ENCODE measurements at regions of chr16 and their contacts with region 1.

Region 1: DNA sequence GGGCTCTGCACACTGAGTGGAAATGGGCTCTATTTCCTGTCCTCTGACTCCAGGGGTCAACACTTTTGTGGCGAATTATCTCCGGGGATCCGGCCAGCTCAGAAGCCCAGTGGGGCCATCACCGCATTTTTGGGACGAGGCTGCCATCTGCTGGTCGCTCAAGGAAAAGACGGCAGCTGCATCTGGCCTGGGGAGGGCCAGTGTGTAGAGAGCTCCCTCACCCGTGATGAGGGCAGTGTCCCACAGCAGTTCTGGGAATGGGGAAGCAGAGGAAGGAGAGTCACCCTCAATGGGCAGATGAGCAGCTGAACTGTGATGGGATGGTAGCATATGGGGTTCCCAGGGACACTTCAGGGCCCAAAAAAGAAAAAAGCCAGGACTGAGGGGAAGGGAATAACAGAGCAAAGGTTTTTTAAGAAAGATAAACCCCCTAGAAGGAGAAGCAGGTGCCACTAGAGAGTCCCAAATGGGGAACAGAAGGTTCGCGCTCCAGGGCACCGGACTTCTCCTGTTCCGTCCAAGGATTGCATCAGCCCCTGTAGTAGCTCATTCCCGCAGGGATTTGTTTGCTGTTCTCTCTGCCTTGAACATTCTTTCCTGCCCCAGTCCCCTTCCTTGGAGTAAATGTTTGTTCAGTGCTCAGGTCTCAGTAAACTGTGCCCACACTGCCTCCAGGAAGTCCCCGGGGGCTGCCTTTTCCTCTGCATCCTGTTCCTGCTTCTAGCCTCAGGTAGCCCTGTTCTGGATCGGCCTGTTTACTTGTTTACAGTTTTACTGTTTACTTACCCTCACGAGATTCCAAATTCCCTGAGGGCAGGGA is 9.3 kb upstream of the ABCC12 start:
- DNase-seq: no peak
- H3K4me3 ChIP-seq: no peak overlapping the region
- H3K27me3 ChIP-seq: no peaks in the 10 kb centered on the region; the same call in 1 of the 2 replicates
- CTCF ChIP-seq: peak; percentile 87

Region 2: GRCh38 chr16:46830902-46831647 is 1334.0 kb before region 1 on chr16 and contains the start of gene C16orf87:
- CTCF ChIA-PET with region 1: no interaction called
- POLR2A ChIA-PET with region 1: no interaction called
- DNase-seq: peak; percentile 54
- H3K4me3 ChIP-seq: peak within 1 kb of the TSS; percentile 77
- H3K27me3 ChIP-seq: no peaks in the 10 kb centered on the region; the same call in 1 of the 2 replicates
- CTCF ChIP-seq: no peak
- polyA plus RNA-seq, gene C16orf87: 2.1 and 5.8 TPM in 2 replicates

Region 3: DNA sequence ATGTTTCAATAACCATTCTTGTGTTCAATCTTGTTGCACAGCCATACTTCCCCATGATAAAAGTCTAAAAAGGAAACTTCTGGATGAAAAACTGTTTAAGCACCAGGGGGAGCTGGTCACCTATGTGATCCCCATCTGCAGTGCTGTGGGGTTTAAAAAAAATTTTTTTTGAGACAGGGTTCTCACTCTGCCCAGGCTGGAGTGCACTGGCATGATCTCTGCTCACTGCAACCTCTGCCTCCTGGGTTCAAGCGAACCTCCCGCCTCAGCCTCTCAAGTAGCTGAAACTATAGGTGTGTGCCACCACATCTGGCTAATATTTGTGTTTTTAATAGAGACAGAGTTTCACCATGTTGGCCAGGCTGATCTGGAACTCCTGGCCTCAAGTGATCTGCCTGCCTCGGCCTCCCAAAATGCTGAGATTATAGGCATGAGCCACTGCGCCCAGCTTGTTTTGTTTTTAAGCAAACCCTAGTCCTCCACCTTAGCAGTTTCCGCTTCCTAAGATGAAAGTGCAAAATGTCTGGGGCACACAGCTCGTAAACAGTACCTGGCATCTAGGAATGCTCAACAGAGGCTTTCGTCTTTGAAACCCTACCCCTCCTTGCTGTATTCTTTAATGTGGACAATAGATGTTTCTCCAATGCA is 1217.1 kb before region 1 on chr16:
- CTCF ChIA-PET with region 1: interaction called, 14 read pairs
- POLR2A ChIA-PET with region 1: no interaction called
- DNase-seq: no peak
- H3K4me3 ChIP-seq: no peak overlapping the region
- H3K27me3 ChIP-seq: no peaks in the 10 kb centered on the region
- CTCF ChIP-seq: peak; percentile 60

Region 4: DNA sequence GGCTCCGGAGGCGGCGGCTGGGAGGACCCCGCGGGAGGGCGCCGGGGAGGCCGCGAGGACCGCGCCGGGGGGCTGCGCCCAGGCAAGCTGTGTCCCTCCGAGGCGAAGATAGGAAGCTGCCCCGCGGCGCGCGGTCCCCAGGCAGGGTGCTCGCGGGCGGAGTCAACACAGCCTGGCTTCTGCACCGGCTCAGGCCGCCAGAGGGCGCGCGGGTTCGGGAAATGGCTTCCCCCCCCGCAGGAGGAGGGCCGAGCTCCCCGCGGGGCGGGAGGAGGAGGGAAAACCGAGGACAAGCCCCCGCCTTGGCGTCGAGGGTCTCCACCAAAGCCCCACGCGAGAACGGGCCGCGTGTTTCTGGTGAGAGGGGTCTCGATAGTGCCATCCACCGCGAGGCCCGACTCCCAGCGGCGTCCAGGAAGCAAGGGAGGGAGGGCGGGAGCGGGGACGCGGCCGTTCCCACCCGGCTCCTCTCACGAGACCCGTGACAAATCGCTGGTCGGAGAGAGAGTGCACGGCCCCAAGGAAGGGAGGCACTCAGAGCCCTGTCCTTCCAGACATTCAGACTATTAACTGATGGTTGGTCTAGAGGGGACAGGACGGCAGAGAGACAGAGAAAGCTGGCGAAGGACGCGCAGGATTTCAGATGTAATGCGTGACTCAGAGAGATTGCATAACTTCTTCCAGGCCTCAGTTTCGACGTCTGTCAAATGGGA is 1127.2 kb before region 1 on chr16:
- CTCF ChIA-PET with region 1: interaction called, 44 read pairs
- POLR2A ChIA-PET with region 1: no interaction called
- DNase-seq: peak; percentile 10
- H3K4me3 ChIP-seq: peak overlapping the region; percentile 57
- H3K27me3 ChIP-seq: no peaks in the 10 kb centered on the region
- CTCF ChIP-seq: peak; percentile 92

Region 5: GRCh38 chr16:47141773-47142485 is 1023.2 kb before region 1 on chr16:
- CTCF ChIA-PET with region 1: interaction called, 69 read pairs
- POLR2A ChIA-PET with region 1: no interaction called
- DNase-seq: peak; percentile 17
- H3K4me3 ChIP-seq: peak overlapping the region; percentile 55
- H3K27me3 ChIP-seq: no peaks in the 10 kb centered on the region
- CTCF ChIP-seq: peak; percentile 98

Region 6: DNA sequence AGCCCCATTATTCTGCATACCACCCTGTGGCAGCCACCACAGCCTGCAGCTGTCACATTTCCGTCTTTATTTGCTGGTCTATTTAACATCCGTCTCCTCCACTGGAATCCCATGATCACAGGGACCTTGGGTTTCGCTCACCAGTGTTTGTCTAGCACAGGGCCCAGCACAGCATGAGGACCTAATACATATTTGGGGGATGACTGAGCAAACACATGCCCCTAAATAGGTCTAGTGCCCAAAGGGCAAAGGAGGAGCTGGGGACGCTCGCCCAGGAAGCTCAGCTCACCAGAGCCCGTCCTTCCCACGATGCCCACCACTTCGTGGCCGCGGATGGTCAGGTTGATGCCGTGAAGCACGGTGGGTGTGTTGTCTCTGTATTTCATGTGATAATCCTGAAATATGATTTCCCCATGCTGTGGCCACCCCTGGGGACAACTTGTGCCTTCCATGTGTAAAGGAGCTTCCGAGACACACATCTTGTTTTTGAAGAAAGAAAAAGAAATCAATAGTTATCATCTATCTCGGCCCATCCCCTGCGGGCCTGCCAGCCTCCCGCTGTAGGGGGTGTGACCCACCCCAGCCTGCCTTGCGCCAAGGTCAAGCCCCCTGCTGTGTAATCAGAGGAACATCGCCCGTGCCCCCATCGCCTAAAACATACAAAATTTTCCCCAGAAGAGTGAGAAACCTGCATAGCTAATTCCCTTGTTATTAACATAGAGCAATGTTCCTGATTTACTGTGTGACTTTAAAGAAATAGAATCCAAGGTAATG is 11.7 kb after region 1 on chr16:
- CTCF ChIA-PET with region 1: interaction called, 10 read pairs
- POLR2A ChIA-PET with region 1: no interaction called
- DNase-seq: no peak
- H3K4me3 ChIP-seq: no peak overlapping the region
- H3K27me3 ChIP-seq: no peaks in the 10 kb centered on the region
- CTCF ChIP-seq: no peak

Region 7: DNA sequence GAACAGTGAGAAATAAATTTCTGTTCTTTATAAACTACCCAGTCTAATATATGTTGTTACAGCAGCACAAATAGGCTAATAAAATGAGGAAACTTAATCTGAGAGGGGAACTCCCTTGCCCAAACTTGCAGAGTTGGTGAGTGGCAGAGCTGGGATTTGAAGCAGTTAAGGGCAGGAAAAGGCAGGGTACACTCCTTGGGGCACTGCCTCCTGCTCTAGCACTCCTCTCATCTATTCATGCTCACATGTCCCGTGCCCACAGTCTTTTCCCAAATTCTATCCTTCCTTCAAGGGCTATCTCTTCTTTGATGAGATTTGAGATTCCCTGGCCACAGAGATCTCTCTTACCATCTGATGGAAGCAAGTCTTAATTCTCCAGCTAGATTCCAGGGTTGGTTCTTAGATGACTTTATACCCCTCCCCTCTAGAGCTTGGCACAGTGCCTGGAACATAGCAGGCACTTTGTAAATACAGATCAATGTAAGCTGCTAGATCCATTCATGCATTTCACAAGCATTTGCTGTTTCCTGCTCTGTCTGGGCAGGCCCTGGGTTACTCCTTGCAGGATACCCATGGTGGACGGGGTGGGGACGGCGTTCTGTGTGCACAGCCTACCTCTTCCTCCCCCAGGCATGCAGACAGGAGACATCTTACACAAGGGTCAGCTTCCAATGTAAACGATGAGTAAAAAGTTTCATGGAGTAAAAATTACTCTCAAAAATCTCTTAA is 29.9 kb after region 1 on chr16:
- CTCF ChIA-PET with region 1: no interaction called
- POLR2A ChIA-PET with region 1: no interaction called
- DNase-seq: no peak
- H3K4me3 ChIP-seq: no peak overlapping the region
- H3K27me3 ChIP-seq: no peaks in the 10 kb centered on the region; the same call in 1 of the 2 replicates
- CTCF ChIP-seq: no peak

Region 8: DNA sequence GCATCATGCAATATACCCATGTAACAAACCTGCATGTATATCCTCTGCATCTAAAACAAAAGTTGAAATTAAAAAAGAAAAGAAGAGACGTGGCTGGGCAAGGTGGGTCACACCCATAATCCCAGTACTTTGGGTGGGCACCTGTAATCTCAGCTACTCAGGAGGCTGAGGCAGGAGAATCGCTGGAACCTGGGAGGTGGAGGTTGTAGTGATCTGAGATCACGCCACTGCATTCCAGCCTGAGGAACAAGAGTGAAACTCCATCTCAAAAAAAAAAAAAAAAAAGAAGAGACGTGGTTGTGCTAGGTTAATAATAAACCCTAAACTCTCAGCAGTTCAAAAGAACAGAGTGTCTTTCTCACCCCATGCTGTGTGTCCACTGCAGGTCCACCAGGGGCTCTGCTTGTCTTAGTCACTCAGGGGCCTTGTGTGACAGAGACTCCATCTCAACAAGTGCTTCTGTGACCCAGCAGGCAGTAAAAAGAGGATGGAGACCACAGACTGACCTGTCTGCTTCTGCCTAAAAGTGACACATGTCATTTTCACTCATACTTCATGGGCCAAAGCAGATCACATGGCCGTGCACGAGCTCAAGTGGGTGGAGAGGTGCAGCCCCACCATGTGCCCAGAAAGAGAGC is 467.1 kb after region 1 on chr16:
- CTCF ChIA-PET with region 1: interaction called, 32 read pairs
- POLR2A ChIA-PET with region 1: no interaction called
- DNase-seq: no peak
- H3K4me3 ChIP-seq: no peak overlapping the region
- H3K27me3 ChIP-seq: no peaks in the 10 kb centered on the region; the same call in 1 of the 2 replicates
- CTCF ChIP-seq: no peak

Region 9: DNA sequence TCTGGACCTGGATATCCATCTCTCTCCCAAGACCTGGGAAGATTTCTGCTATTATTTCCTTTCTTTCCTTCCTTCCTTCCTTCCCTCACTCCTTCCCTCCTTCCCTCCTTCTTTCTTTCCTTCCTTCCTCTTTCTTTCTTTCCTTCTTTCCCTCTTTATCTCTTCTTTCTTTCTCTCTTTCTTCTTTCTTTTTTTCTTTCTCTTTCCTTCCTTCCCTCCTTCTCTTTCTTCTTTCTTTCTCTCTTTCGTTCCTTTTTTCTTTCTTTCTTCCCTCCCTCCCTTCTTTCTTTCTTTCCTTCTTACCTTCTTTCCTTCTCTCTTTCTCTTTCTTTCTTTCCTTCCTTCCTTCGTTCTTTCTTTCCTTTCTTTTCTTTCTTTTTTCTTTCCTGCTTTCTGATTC is 482.7 kb after region 1 on chr16:
- CTCF ChIA-PET with region 1: no interaction called
- POLR2A ChIA-PET with region 1: no interaction called
- DNase-seq: no peak
- H3K4me3 ChIP-seq: no peak overlapping the region
- H3K27me3 ChIP-seq: no peaks in the 10 kb centered on the region
- CTCF ChIP-seq: no peak

Measured in BJ (cell line).